Motor neuron (in vitro differentiated cells): ENCODE measurements at regions of chr7 and their contacts with region 1.

Region 1: DNA sequence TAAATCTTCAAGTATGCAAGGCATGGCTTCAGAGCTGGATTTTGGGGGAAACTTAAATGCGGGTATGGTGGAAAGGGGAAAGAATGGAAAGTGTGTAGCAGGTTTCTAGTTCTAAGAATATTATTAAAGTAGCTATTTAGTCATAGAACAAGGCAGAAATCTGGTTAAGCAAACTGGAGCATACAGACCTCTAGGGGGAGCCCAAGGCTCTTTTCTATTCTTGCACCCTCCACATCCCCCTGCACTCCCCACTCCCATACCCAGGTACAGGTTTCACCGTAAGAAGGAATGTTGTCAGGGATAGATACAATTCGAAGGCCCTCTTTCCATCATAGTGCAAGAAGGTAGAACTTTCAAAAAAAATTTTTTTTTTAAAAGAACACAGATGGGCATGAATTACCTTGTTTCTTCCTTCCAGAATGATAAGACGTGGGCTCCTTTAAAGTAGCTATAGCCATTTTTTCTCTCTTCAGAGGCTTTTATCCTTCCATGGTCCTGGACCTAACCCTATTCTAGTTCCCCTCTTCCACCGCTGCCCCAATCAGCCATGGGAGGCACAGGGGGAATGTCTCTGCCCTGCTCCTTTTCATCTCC is 41.5 kb upstream of the SMIM30 start:
- ATAC-seq: peak in 3 of 8 experiments; percentile 55 to 68 (median 67)
- H3K4me3 ChIP-seq: no peak overlapping the region
- H3K27ac ChIP-seq: no peak overlapping the region
- H3K4me1 ChIP-seq: peaks cover 0 to 1% of the 10 kb centered on the region in 2 donors

Region 2: GRCh38 chr7:113217314-113217713 is 57.5 kb after region 1 on chr7:
- in situ Hi-C with region 1: loop called in 1 of 9 experiments (anchors 10 kb)
- ATAC-seq: no peak
- H3K4me3 ChIP-seq: no peak overlapping the region
- H3K27ac ChIP-seq: no peak overlapping the region
- H3K4me1 ChIP-seq: no peaks in the 10 kb centered on the region

Region 3: GRCh38 chr7:113421696-113422330 is 262.0 kb after region 1 on chr7:
- in situ Hi-C with region 1: loop called in 2 of 9 experiments (anchors 25 kb)
- ATAC-seq: peak; percentile 65 to 100 (median 83)
- H3K4me3 ChIP-seq: no peak overlapping the region
- H3K27ac ChIP-seq: no peak overlapping the region
- H3K4me1 ChIP-seq: peaks cover 0 to 12% of the 10 kb centered on the region in 2 donors